ENCODE measurements at regions of chr7 and their contacts with region 1.

Region 1: GRCh38 chr7:73526896-73527821 is 5.1 kb upstream of the BAZ1B start:
- DNase-seq: no peak
- H3K27ac ChIP-seq: peak overlapping the region; percentile 36; the same call in 1 of the 2 replicates
- CTCF ChIP-seq: no peak

Region 2: GRCh38 chr7:73515178-73515577 is 12.0 kb before region 1 on chr7:
- CTCF ChIA-PET with region 1: no interaction called
- POLR2A ChIA-PET with region 1: interaction called, 10 read pairs
- DNase-seq: no peak
- H3K27ac ChIP-seq: no peak overlapping the region
- CTCF ChIP-seq: no peak

Region 3: DNA sequence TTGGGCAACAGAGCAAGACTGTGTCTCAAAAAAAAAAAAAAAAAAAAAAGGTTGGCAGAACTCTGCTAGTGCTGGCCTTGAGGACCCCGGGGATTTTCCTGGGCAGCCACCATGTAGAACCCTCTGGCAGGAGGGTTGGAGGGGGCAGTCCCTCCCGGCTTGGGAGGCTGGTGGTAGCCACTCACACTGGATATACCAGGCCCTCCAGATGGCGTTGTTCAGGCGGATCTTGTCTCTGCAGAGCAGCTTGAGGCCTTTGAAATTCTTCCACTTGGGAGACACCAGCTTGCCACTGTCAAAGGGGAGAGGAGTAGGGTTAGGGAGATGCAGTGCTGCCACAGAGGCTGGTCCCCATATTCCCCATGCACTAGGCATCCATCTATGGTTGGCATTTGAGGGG is 88.7 kb after region 1 on chr7:
- CTCF ChIA-PET with region 1: no interaction called
- POLR2A ChIA-PET with region 1: interaction called, 14 read pairs
- DNase-seq: no peak
- H3K27ac ChIP-seq: peak overlapping the region; percentile 21; the same call in 1 of the 2 replicates
- CTCF ChIP-seq: no peak

Region 4: GRCh38 chr7:73678862-73679261 is 151.7 kb after region 1 on chr7:
- CTCF ChIA-PET with region 1: no interaction called
- POLR2A ChIA-PET with region 1: no interaction called
- DNase-seq: no peak
- H3K27ac ChIP-seq: no peak overlapping the region
- CTCF ChIP-seq: no peak

Measured in RWPE1 (cell line).